Endothelial cell of umbilical vein (primary cell): ENCODE measurements at regions of chr1 and their contacts with region 1.

Region 1: GRCh38 chr1:17502326-17502778 is 37.1 kb upstream of the ARHGEF10L start:
- DNase-seq: peak; percentile 50
- H3K4me3 ChIP-seq: no peak overlapping the region
- H3K27ac ChIP-seq: no peak overlapping the region
- H3K4me1 ChIP-seq: no peaks in the 10 kb centered on the region
- H3K27me3 ChIP-seq: no peaks in the 10 kb centered on the region
- CTCF ChIP-seq: peak; percentile 82 to 92
- POLR2A ChIP-seq: no peak

Region 2: DNA sequence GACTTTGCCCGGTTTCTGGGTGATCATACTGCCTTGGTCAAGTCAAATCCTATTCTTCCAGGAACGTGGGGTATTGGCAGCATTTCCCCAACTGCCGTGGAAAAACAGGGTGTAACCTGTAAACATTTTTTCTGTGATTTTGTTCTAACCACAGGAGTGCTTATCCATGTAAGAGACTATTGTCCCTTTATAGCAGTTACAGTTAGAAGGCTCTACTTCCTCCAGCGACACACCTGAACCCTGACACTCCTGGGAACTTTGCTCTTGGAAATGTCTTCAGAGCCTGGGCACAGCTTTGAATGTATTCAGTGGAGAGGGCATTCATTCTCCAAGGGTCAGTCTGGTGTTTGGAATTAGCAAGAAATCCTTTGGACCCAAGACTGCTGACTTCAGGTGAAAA is 10.8 kb after region 1 on chr1:
- CTCF ChIA-PET with region 1: interaction called, 26 read pairs
- POLR2A ChIA-PET with region 1: no interaction called
- dilution Hi-C with region 1: no loop called
- intact Hi-C with region 1: no loop called
- DNase-seq: no peak
- H3K4me3 ChIP-seq: no peak overlapping the region
- H3K27ac ChIP-seq: no peak overlapping the region
- H3K4me1 ChIP-seq: no peaks in the 10 kb centered on the region
- H3K27me3 ChIP-seq: no peaks in the 10 kb centered on the region
- CTCF ChIP-seq: no peak
- POLR2A ChIP-seq: no peak

Region 3: DNA sequence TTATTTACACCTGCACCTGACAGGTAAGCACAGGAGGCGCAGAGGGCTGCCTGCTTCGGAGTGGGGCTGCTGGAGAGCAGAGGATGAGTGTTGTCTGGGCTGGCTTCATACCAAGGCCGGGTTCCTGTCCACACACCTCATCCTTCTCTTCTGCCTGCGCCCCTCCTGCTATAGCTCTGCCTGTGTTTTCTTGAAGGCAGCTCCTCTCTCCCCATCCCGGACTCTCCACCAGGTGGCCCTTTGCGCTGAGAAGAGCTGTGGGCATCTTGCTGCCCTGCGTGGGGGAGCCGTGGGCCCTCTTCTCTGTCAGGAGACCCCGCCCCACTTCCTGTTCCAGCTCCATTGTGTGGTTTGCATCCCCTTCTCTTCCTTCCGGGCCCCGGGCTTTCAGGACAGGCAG is 72.2 kb after region 1 on chr1:
- CTCF ChIA-PET with region 1: interaction called, 12 read pairs
- POLR2A ChIA-PET with region 1: no interaction called
- dilution Hi-C with region 1: no loop called
- intact Hi-C with region 1: no loop called
- DNase-seq: no peak
- H3K4me3 ChIP-seq: no peak overlapping the region
- H3K27ac ChIP-seq: no peak overlapping the region
- H3K4me1 ChIP-seq: no peaks in the 10 kb centered on the region
- H3K27me3 ChIP-seq: no peaks in the 10 kb centered on the region
- CTCF ChIP-seq: no peak
- POLR2A ChIP-seq: no peak

Region 4: DNA sequence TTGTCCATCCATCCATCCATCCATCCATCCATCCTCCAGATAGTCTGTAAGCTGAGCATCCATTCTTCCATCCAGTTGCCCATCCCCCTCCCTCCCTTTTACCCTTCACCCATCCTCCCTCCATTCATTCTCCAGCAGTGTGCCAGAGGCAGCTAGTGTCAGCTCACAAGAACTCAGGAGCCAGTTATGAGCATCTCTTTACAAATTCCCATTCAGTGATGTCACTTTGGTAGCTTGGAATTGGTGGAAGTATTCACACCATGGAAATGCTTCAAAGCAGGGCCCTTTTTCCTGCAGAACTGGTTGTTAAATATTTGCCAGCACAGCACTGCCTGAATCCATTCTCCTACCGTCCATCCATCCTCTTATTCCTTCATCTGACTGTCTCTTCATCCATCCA is 109.6 kb after region 1 on chr1:
- CTCF ChIA-PET with region 1: interaction called, 374 read pairs
- POLR2A ChIA-PET with region 1: interaction called, 3 read pairs
- dilution Hi-C with region 1: no loop called
- intact Hi-C with region 1: no loop called
- DNase-seq: no peak
- H3K4me3 ChIP-seq: no peak overlapping the region
- H3K27ac ChIP-seq: no peak overlapping the region
- H3K4me1 ChIP-seq: no peaks in the 10 kb centered on the region
- H3K27me3 ChIP-seq: no peaks in the 10 kb centered on the region
- CTCF ChIP-seq: no peak
- POLR2A ChIP-seq: no peak

Region 5: GRCh38 chr1:18575620-18576019 is 1073.3 kb after region 1 on chr1:
- CTCF ChIA-PET with region 1: interaction called, 21 read pairs
- POLR2A ChIA-PET with region 1: no interaction called
- dilution Hi-C with region 1: no loop called
- intact Hi-C with region 1: loop called (anchors 2 kb)
- DNase-seq: peak; percentile 18
- H3K4me3 ChIP-seq: no peak overlapping the region
- H3K27ac ChIP-seq: no peak overlapping the region
- H3K4me1 ChIP-seq: no peaks in the 10 kb centered on the region
- H3K27me3 ChIP-seq: no peaks in the 10 kb centered on the region
- CTCF ChIP-seq: peak; percentile 39 to 75
- POLR2A ChIP-seq: no peak

Region 6: DNA sequence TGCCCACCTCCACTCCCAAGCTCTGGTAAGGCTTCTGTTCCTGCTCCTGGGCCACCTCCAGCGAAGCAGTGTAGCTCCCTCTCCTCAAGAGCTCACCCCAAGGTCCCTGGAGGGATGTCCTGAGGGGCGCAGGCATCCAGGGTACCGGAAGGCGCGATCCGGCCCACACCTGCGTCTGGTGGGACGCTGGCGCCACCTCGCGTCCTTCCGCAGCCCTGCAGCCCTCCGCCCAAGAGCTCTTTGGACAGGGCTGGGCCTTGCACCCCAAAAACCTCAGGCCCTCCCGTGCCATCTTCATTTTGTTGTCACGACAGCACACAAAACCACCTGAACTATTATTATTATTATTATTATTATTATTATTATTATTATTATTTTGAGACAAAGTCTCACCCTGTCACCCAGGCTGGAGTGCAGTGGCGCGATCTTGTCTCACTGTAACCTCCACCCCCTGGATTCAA is 1079.1 kb after region 1 on chr1:
- CTCF ChIA-PET with region 1: interaction called, 21 read pairs
- POLR2A ChIA-PET with region 1: no interaction called
- dilution Hi-C with region 1: no loop called
- intact Hi-C with region 1: loop called (anchors 2 kb)
- DNase-seq: peak; percentile 8
- H3K4me3 ChIP-seq: no peak overlapping the region
- H3K27ac ChIP-seq: no peak overlapping the region
- H3K4me1 ChIP-seq: no peaks in the 10 kb centered on the region
- H3K27me3 ChIP-seq: no peaks in the 10 kb centered on the region
- CTCF ChIP-seq: peak; percentile 68 to 84
- POLR2A ChIP-seq: no peak